Endothelial cell of umbilical vein (primary cell): ENCODE measurements at regions of chr10 and their contacts with region 1.

Region 1: GRCh38 chr10:97686962-97687784 is at the start of gene AVPI1:
- DNase-seq: peak; percentile 98
- H3K4me3 ChIP-seq: peak within 1 kb of the TSS; percentile 41 to 62 (median 60)
- H3K27ac ChIP-seq: peak within 1 kb of the TSS; percentile 42
- H3K4me1 ChIP-seq: peaks cover 16% of the 10 kb centered on the region
- H3K27me3 ChIP-seq: no peaks in the 10 kb centered on the region
- CTCF ChIP-seq: no peak
- POLR2A ChIP-seq: peak; percentile 68
- total RNA-seq, gene AVPI1: 2.4 and 3.0 TPM in 2 replicates

Region 2: GRCh38 chr10:97608991-97609561 is 78.1 kb before region 1 on chr10:
- CTCF ChIA-PET with region 1: no interaction called
- POLR2A ChIA-PET with region 1: no interaction called
- dilution Hi-C with region 1: no loop called
- intact Hi-C with region 1: no loop called
- DNase-seq: no peak
- H3K4me3 ChIP-seq: no peak overlapping the region
- H3K27ac ChIP-seq: no peak overlapping the region
- H3K4me1 ChIP-seq: no peaks in the 10 kb centered on the region
- H3K27me3 ChIP-seq: no peaks in the 10 kb centered on the region
- CTCF ChIP-seq: no peak
- POLR2A ChIP-seq: no peak

Region 3: DNA sequence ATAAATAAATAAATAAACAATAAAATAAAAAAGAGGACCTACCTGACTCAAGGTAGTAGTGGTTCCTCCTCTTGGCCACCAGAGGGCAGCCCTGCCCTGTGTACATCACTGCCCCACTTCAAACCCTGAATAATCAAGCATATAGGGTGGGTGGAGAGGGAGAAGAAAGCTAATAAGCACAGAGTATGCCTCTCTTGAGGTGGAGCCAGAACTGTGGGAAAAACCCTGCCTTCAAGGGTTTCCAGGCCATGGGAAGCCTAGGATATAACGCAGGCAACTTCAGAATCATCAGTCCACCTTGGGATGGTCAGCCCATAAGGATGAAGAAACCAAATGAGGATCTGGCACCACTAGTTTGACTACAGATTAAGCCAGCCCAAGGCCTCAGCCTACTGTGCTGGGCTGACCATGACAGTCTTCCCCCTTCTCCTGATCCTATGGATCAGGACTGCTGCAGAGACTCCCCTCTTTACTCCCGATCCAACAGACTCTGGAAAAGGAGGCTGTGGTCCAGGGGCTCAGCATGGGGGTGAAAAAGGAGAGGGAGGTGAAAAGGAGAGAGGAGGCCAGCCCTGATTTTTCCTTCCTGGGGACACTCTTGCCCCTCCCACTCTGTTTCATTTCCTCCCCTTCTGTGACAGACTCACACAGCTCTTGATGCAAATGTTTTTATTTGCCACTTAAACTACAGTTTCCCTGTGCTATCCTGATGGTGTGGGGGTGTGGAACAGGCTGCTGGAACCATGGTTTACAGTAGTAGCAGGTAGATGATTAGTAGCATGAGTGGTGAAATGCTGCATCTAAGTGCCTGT is 10.2 kb before region 1 on chr10:
- CTCF ChIA-PET with region 1: interaction called, 25 read pairs
- POLR2A ChIA-PET with region 1: interaction called, 6 read pairs
- dilution Hi-C with region 1: no loop called
- intact Hi-C with region 1: no loop called
- DNase-seq: peak; percentile 61
- H3K4me3 ChIP-seq: no peak overlapping the region
- H3K27ac ChIP-seq: no peak overlapping the region
- H3K4me1 ChIP-seq: peaks cover 3% of the 10 kb centered on the region
- H3K27me3 ChIP-seq: no peaks in the 10 kb centered on the region
- CTCF ChIP-seq: peak; percentile 78 to 80
- POLR2A ChIP-seq: peak; percentile 15

Region 4: GRCh38 chr10:97714048-97714371 is 26.8 kb after region 1 on chr10:
- CTCF ChIA-PET with region 1: interaction called, 39 read pairs
- POLR2A ChIA-PET with region 1: interaction called, 5 read pairs
- dilution Hi-C with region 1: no loop called
- intact Hi-C with region 1: loop called (anchors 1 kb)
- DNase-seq: peak; percentile 81
- H3K4me3 ChIP-seq: peak overlapping the region; percentile 14 to 62 (median 28)
- H3K27ac ChIP-seq: peak overlapping the region; percentile 39
- H3K4me1 ChIP-seq: peaks cover 22% of the 10 kb centered on the region
- H3K27me3 ChIP-seq: no peaks in the 10 kb centered on the region
- CTCF ChIP-seq: peak; percentile 7 to 29
- POLR2A ChIP-seq: peak; percentile 35

Region 5: DNA sequence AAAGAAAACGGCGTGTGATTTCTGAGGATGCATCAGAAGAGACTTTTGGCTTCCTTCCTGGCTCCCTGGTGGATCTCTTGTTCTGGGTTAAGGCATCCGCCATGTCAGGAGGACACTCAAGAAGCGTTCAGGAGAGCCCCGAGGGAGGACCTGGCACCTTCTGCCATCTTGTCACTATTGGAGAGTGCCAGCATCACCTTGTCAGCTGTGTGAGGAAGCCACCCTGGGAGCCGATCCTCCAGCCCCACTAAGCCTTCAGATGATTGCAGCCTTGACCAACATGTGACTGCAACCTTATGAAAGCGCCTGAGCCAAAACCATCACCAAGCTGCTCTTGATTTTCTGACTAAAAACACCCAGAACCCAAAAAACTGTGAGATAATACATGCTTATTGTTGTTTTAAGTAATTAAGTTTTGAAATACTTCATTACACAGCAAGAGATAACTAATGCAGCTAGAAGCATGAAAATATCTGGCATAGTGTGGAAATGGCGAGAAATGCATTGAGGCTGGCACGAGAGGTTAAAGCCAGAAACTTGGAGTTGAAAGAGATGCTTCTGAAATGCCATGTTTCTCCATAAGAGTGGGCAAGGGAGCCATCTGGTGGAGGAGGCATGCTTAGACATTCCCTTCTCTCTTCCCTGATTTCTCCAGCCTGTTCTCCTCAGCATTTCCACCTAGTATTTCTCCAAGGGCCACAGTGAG is 44.3 kb after region 1 on chr10:
- CTCF ChIA-PET with region 1: interaction called, 20 read pairs
- POLR2A ChIA-PET with region 1: interaction called, 3 read pairs
- dilution Hi-C with region 1: no loop called
- intact Hi-C with region 1: loop called (anchors 1 kb)
- DNase-seq: peak; percentile 79
- H3K4me3 ChIP-seq: no peak overlapping the region
- H3K27ac ChIP-seq: no peak overlapping the region
- H3K4me1 ChIP-seq: peaks cover 6% of the 10 kb centered on the region
- H3K27me3 ChIP-seq: no peaks in the 10 kb centered on the region
- CTCF ChIP-seq: peak; percentile 82
- POLR2A ChIP-seq: no peak